ENCODE measurements at regions of chr21 and their contacts with region 1.

Region 1: DNA sequence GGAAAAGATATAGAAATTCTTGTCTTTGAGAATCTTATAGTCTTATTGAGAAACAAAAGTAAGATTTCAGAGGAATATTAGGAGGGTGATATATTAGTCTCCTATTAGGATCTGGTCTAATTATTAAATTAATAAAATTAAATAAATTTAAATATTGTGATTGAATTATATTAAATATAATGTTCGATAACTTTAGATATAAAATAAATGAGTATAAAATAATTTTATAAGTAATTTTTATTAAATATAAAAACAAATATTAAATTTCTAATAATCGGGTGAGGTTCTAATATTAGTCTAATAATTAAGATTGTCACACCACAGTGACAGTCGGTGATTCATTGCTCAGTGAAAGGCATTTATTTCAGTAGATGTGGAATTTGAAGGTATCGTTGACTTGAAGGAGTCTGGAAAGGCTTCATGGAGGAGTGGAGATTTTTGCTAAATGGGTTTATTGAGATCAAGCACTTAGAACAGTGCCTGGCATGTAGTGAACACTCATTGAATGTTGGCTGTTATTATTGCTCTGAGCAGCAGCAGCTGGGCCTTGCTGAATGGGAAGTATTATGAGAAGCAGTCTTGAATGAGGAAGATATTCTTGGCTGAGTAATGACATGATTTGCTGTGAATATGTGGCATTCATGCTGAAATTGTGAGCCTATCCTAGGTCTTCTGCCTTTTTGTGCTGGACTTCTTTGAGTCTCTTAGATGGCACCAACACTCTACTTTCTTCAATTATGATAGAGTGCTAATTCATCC is 74.6 kb downstream of the USP25 start:
- DNase-seq: no peak
- H3K4me3 ChIP-seq: no peak overlapping the region
- H3K27ac ChIP-seq: no peak overlapping the region
- H3K4me1 ChIP-seq: no peaks in the 10 kb centered on the region
- CTCF ChIP-seq: no peak

Region 2: DNA sequence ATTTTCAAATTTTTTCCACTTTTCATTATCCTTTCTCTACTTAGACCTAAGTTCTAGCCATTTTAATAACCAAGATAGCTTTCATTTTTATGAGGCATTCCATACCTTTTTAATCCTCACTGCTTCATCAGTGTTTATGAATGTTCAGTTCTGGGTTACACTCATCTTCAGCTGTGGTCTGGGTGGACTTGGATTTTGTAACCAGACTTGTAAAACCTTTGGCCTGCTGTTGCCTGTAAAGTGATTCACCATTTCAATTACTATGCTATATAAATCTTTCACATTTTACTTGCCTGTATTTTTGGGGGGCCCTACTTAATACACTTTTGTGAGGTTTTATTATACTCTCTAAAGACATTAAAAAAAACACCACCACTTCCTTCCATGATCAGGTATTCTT is 28.4 kb before region 1 on chr21:
- CTCF ChIA-PET with region 1: no interaction called
- POLR2A ChIA-PET with region 1: no interaction called
- intact Hi-C with region 1: no loop called
- DNase-seq: no peak
- H3K4me3 ChIP-seq: no peak overlapping the region
- H3K27ac ChIP-seq: no peak overlapping the region
- H3K4me1 ChIP-seq: no peaks in the 10 kb centered on the region
- CTCF ChIP-seq: no peak

Region 3: DNA sequence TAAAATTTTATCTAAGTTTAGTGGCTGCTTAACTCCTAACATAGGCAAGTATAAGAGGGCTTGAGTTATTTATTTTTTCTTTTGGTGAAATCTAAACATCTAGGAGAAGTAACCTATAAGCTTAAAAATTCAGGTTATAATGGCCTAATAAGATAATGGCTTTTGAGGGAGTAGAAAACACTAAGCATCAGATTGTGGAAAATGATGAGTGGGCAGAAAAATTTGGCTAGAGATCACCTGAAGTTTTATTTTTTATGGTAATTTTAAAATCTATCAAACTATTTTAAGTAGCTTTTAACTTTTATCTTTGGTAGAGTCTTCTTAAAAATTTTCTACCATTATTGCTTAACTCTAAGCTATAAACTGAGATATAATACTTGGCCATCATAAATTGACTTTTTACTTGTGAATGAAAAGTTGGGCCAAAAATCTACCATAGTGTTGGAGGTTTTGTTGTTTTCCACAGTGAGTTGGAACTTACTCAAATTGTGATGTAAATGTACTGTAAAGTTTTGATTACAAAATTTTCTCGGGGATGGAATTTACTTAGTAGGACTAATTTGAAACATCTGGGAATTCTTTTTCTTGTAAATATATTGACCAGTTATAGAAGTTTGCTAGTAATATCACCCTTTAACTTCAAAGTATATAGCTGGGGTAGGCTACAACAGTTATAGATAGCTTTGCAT is 10.7 kb before region 1 on chr21:
- CTCF ChIA-PET with region 1: no interaction called
- POLR2A ChIA-PET with region 1: interaction called, 11 read pairs
- intact Hi-C with region 1: no loop called
- DNase-seq: no peak
- H3K4me3 ChIP-seq: no peak overlapping the region
- H3K27ac ChIP-seq: no peak overlapping the region
- H3K4me1 ChIP-seq: no peaks in the 10 kb centered on the region
- CTCF ChIP-seq: no peak